ENCODE measurements at regions of chr16 and their contacts with region 1.

Region 1: GRCh38 chr16:19601083-19601976 is 45.8 kb downstream of the VPS35L start:
- DNase-seq: peak; percentile 48
- H3K4me3 Mint-ChIP-seq: no peak overlapping the region
- H3K27ac Mint-ChIP-seq: peak overlapping the region; percentile 27
- H3K4me1 Mint-ChIP-seq: no peaks in the 10 kb centered on the region
- H3K27me3 Mint-ChIP-seq: no peaks in the 10 kb centered on the region
- CTCF ChIP-seq: peak; percentile 55

Region 2: DNA sequence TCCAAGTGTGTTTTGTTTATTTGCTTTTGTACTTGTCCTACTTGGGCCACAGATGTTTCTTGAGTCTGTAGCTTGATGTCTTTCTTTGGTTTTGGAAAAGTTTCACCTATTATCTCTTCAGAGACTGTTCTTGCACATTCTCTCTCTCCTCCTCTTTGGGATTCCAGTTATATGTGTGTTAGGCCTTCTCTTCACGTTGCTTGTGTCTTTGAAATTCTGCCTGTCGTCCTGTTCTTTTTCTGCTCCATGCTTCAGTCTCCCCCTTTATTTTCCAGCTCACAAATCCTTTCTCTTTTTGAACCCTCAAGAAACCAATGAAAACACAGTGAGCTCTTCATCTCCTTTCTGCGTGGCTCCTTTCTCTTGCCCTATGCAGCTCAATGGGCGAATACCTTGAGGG is 38.0 kb before region 1 on chr16:
- CTCF ChIA-PET with region 1: interaction called, 55 read pairs
- POLR2A ChIA-PET with region 1: no interaction called
- intact Hi-C with region 1: loop called (anchors 5 kb)
- DNase-seq: no peak
- H3K4me3 Mint-ChIP-seq: no peak overlapping the region
- H3K27ac Mint-ChIP-seq: no peak overlapping the region
- H3K4me1 Mint-ChIP-seq: no peaks in the 10 kb centered on the region
- H3K27me3 Mint-ChIP-seq: no peaks in the 10 kb centered on the region
- CTCF ChIP-seq: no peak

Region 3: DNA sequence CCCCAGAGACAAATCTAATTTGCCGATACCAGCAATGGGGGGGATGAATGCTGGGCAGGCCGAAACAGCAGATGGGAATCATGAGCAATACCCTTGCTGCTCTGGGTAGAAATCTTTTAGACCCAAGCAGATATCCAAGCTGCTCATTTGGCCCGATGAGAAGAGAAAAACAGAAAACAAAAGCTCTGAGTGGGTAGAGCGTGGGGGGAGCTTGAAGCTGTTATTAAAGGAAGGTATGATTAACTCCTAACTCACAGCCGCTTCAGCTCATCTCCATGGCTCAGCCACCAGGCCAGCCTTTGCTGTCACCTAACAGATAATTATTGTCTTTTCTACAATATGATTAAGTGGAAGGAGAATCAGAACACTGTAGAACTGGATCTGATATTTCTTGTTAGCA is 12.5 kb after region 1 on chr16:
- CTCF ChIA-PET with region 1: interaction called, 16 read pairs
- POLR2A ChIA-PET with region 1: no interaction called
- intact Hi-C with region 1: no loop called
- DNase-seq: no peak
- H3K4me3 Mint-ChIP-seq: no peak overlapping the region
- H3K27ac Mint-ChIP-seq: no peak overlapping the region
- H3K4me1 Mint-ChIP-seq: no peaks in the 10 kb centered on the region
- H3K27me3 Mint-ChIP-seq: no peaks in the 10 kb centered on the region
- CTCF ChIP-seq: no peak

Region 4: GRCh38 chr16:19717771-19718602 is 116.7 kb after region 1 on chr16 and contains the starts of genes IQCK and KNOP1:
- CTCF ChIA-PET with region 1: interaction called, 7 read pairs
- POLR2A ChIA-PET with region 1: interaction called, 5 read pairs
- intact Hi-C with region 1: loop called (anchors 5 kb)
- DNase-seq: peak; percentile 80
- H3K4me3 Mint-ChIP-seq: peak within 1 kb of the TSS; percentile 87
- H3K27ac Mint-ChIP-seq: peak within 1 kb of the TSS; percentile 65
- H3K4me1 Mint-ChIP-seq: peaks cover 27% of the 10 kb centered on the region
- H3K27me3 Mint-ChIP-seq: no peaks in the 10 kb centered on the region
- CTCF ChIP-seq: no peak
- total RNA-seq, gene IQCK: 5.9 and 8.4 TPM in 2 replicates
- total RNA-seq, gene KNOP1: 22.3 and 24.5 TPM in 2 replicates

Region 5: GRCh38 chr16:19898924-19899604 is 297.7 kb after region 1 on chr16:
- CTCF ChIA-PET with region 1: interaction called, 33 read pairs
- POLR2A ChIA-PET with region 1: no interaction called
- intact Hi-C with region 1: no loop called
- DNase-seq: peak; percentile 73
- H3K4me3 Mint-ChIP-seq: no peak overlapping the region
- H3K27ac Mint-ChIP-seq: no peak overlapping the region
- H3K4me1 Mint-ChIP-seq: no peaks in the 10 kb centered on the region
- H3K27me3 Mint-ChIP-seq: no peaks in the 10 kb centered on the region
- CTCF ChIP-seq: peak; percentile 71